Transverse colon (tissue), 4 donors: ENCODE measurements at regions of chr7 and their contacts with region 1.

Region 1: DNA sequence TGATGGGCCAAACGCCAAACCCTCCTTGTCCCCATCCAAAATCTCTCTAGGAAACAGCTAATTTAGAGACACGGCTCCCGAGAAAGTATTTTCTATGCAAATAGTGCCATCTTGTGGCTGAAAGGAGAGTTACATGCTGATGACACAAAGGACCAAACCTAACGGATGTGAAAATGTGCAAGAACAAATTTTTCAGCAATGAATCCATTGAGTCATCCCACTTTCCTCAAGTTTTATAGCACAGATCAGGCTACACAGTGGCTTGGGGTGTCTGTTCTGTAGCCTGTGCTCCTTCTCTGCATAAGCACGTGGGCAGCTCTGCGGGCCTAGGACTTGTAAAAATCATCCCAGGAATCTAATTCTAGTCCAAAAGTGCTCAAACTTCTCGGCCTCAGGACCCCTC is 154.8 kb upstream of the PRR15 start:
- DNase-seq: peak; percentile 48
- H3K4me3 ChIP-seq: no peak overlapping the region
- H3K27ac ChIP-seq: no peak overlapping the region
- H3K4me1 ChIP-seq: peaks cover 0 to 24% (median 8%) of the 10 kb centered on the region in 4 donors
- H3K27me3 ChIP-seq: no peaks in the 10 kb centered on the region
- CTCF ChIP-seq: peak; percentile 84 to 90 (median 88)
- EP300 ChIP-seq: no peak
- POLR2A ChIP-seq: no peak

Region 2: DNA sequence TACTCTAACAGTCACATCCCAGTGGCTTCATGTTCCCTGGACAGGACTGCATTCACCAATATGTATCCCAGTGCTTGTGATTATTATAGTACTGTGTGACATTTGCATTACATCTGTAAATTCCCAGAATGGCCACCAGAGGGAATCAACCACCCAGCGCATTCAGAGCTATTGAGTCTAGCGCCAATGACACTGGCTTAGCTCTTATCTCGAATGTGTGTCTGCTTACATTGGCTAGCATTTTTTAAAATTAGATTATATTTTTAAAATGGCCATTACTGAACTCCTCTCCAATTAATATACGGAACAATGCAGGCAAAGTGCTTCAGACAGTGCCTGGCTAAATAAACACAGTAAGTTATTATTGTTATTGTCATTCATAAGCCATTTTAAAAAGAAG is 487.0 kb before region 1 on chr7:
- in situ Hi-C with region 1: loop called (anchors 5 to 10 kb)
- intact Hi-C with region 1: loop called (anchors 2 kb)
- DNase-seq: peak; percentile 40
- H3K4me3 ChIP-seq: no peak overlapping the region
- H3K27ac ChIP-seq: no peak overlapping the region
- H3K4me1 ChIP-seq: peaks cover 0 to 16% (median 6%) of the 10 kb centered on the region in 4 donors
- H3K27me3 ChIP-seq: no peaks in the 10 kb centered on the region
- CTCF ChIP-seq: peak; percentile 86 to 92 (median 88)
- EP300 ChIP-seq: no peak
- POLR2A ChIP-seq: no peak

Region 3: DNA sequence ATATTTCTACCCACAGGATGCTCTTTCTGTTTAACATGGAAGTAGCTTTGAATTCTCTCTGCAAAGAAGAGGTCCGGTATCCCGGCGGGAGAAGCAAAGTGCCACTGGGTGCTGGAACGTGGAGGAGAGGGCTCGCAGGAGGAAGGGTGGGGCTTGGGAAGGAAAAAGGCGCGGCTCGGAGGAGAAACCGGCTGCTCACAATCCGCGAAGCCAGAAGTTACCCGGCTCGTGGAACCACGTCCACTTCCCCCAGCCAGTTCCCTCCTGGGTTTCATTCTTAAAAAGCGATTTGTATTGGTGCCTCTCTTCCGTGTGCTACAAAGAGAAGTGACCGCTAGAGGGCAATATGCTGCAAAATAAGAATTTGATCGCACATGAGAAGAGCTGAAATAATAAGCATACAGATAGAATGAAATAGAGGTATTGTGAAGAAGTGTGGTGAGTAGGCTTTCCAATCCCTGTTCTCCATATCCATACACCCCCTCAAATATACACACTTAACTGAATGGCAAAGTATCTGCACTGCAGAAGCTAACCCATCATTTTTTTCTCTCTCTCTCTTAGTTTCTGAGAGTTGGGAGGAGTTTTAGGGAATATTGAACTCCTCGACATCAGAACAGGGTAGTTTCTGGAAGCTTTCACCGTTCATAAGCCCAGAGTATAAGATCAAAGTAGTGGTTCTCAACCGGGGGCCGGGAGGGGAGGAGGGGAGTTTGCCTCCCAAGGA is 481.8 kb before region 1 on chr7:
- in situ Hi-C with region 1: loop called (anchors 5 to 10 kb)
- intact Hi-C with region 1: loop called (anchors 2 kb)
- DNase-seq: peak; percentile 62
- H3K4me3 ChIP-seq: peak overlapping the region in 3 of 4 donors; percentile 34 to 59 (median 37)
- H3K27ac ChIP-seq: peak overlapping the region in 3 of 4 donors; percentile 18 to 47 (median 46)
- H3K4me1 ChIP-seq: peaks cover 0 to 15% (median 7%) of the 10 kb centered on the region in 4 donors
- H3K27me3 ChIP-seq: no peaks in the 10 kb centered on the region
- CTCF ChIP-seq: peak; percentile 75 to 82 (median 81)
- EP300 ChIP-seq: no peak
- POLR2A ChIP-seq: no peak

Region 4: DNA sequence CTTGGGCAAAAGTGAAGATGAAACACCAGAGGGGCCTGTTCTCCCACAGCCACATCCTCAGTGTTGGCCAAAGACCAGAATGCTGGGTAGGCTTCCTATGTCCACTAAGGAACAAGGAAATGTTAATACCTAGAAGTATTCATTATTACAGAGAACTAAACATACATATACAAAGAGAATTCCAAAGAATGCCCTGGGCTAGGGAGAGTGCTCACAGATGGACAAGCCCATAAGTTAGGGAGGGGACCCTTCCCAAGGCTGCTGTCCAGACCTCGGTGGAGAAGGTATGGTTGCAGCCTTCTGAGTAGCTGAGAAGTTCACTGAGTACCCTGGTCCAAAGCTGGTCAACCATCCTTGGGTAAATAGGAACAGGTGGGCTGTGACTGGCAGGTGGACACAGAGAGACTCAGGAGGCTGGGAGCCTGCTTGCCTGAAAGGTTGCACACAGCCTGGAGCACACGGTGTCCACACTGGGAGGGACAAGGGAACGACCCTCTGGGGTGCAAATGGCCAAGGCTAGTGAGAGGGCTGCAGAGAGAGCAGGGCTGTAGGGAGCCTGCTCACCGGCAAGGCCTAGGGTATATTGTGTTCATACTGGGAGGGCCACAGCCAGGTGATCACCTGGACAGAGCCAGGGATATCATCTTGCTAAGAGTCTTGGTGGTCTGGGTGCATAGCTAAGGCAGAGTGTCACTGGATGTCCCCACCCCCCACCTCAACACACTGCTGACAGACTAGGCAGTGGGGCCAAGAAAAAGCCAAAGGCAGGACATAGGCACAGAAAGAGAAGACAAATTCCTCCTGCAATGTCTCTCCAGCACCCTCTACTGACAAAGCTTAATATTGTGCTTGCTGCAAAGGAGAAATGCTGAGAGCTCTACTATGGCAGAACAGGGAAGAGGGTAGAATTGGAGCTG is 302.8 kb before region 1 on chr7:
- in situ Hi-C with region 1: loop called in 3 of 4 experiments (anchors 5 to 10 kb)
- intact Hi-C with region 1: loop called (anchors 5 kb)
- DNase-seq: no peak
- H3K4me3 ChIP-seq: no peak overlapping the region
- H3K27ac ChIP-seq: no peak overlapping the region
- H3K4me1 ChIP-seq: peaks cover 0 to 8% (median 4%) of the 10 kb centered on the region in 4 donors
- H3K27me3 ChIP-seq: no peaks in the 10 kb centered on the region
- CTCF ChIP-seq: peak; percentile 74 to 85 (median 78)
- EP300 ChIP-seq: no peak
- POLR2A ChIP-seq: no peak

Region 5: GRCh38 chr7:29189743-29190201 is 219.1 kb before region 1 on chr7:
- in situ Hi-C with region 1: loop called (anchors 5 to 25 kb)
- intact Hi-C with region 1: loop called (anchors 2 kb)
- DNase-seq: peak; percentile 67
- H3K4me3 ChIP-seq: peak overlapping the region in 1 of 4 donors; percentile 30
- H3K27ac ChIP-seq: peak overlapping the region in 2 of 4 donors; percentile 7 to 33
- H3K4me1 ChIP-seq: peaks cover 0 to 18% (median 16%) of the 10 kb centered on the region in 4 donors
- H3K27me3 ChIP-seq: peaks cover 4% of the 10 kb centered on the region
- CTCF ChIP-seq: peak; percentile 77 to 87 (median 82)
- EP300 ChIP-seq: no peak
- POLR2A ChIP-seq: no peak